Posterior cingulate gyrus (tissue), 11 donors: ENCODE measurements at regions of chr16 and their contacts with region 1.

Region 1: DNA sequence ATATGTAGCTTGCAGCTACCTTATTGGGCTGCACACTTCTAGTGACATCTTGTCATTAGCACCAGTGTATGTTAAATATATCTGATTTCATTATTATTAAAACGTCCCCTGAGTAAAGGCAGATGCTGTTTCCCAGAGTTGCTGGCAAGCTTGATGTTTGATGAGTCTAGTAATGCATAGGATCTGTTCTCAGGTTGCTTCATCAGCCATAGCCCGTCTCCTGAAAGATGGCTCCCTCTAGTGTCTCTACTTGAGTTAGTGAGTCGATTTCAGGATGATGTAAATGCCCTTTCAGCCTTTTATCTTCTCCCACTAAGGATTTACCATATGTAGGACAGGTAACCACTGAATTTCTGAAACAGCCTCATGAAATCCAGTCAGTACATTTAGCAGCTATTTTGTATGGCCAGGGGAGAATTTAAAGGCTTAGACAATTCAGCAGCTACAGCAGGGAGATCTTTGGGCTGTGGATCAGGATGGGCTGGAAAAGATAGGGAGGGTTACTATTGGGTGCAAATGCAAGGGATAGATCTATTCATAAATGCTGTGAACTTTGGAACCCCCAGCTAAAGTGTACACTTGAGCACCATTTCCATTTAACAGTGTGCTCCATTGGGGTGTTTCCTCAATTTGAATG is 376.3 kb downstream of the CNTNAP4 start:
- DNase-seq: peak in 4 of 10 donors; percentile 19 to 61 (median 30)

Region 2: GRCh38 chr16:75789237-75789636 is 864.3 kb before region 1 on chr16:
- intact Hi-C with region 1: loop called (anchors 5 kb)
- DNase-seq: no peak

Region 3: DNA sequence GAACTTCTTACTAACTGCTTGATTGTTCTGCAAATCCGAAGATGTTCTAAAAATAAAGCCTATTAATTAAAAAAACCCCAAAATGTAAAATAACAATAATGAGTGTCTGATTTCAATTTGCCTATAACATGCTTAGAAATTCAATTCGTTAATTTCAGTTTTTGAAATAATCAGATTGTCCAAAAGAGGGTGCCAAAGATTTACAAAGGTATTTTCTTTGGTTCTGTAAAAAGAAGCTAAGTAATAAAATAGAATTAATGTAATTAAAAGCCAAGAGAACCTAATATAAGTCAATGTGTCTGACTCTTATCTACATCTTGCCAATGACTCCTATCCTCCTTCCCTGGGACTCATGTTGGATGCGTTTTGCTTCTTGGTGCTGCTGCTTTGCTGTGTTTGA is 852.2 kb before region 1 on chr16:
- intact Hi-C with region 1: loop called (anchors 5 kb)
- DNase-seq: no peak

Region 4: DNA sequence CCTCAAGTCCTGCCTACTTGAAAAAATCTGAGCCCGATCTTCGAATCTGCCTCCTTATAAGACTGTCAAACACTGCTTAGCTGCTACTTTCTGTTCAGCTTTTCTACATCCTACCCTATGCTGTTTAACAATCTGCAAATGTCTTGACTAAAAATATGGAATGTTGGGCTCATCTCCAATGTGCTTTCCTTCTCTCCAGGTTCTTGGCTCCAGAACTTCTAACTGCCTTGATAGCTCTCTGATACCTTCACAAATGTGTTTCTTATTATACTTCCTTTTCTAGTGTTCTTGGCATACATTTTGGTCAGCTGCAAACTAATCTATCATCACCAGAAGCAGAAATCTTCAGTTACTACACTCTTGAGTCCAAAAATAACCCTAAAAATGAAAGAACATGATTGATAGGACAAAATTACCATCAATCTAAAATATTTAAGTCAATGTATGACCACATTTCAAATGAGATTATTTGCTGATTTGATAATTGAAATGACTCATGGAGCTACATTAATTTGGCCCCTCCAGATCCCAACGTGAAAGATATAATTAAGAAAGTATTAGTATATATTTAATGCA is 165.2 kb after region 1 on chr16:
- intact Hi-C with region 1: no loop called
- DNase-seq: no peak